HCT116 (cell line): ENCODE measurements at regions of chr2 and their contacts with region 1.

Region 1: DNA sequence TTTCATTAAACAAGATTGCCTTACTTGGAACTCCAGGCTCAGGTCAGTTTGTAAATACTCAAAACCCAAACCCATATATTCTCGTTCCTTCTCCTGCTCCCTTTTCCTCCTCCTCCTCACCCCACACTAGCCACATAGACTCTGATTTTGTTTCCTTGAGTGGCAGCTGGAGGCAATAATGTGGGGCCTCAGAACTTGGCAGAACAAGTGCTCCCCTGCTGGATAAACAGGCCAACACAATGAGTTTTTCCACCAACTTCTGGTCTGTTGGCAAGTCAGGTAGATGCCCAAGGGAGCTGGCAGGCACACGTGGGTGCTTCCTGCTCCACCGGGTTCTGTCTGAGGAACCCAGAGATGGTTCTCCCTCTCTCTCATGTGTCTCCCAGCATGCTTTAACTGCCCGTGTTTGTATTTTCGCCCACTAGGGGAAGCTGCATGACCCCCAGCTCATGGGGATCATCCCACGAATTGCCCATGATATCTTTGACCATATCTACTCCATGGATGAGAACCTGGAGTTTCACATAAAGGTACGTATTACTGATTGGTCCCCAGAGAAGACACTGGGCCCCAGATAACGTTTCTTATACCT is 61.9 kb downstream of the KIF5C start:
- DNase-seq: no peak
- ATAC-seq: peak; percentile 42
- H3K4me3 ChIP-seq: no peak overlapping the region
- H3K27ac ChIP-seq: no peak overlapping the region
- H3K4me1 ChIP-seq: no peaks in the 10 kb centered on the region
- H3K27me3 ChIP-seq: no peaks in the 10 kb centered on the region
- CTCF ChIP-seq: peak in 2 of 3 experiments; percentile 19 to 32; a peak in 3 of 6 replicates
- POLR2A ChIP-seq: no peak
- RAD21 ChIP-seq: peak; percentile 24

Region 2: GRCh38 chr2:148926291-148926961 is 10.5 kb before region 1 on chr2:
- CTCF ChIA-PET with region 1: interaction called, 14 read pairs
- POLR2A ChIA-PET with region 1: interaction called, 3 read pairs
- RAD21 ChIA-PET with region 1: no interaction called
- intact Hi-C with region 1: no loop called
- DNase-seq: peak; percentile 33
- ATAC-seq: peak; percentile 84
- H3K4me3 ChIP-seq: peak overlapping the region; percentile 55 to 62
- H3K27ac ChIP-seq: peak overlapping the region; percentile 58
- H3K4me1 ChIP-seq: peaks cover 7 to 17% of the 10 kb centered on the region in 2 experiments
- H3K27me3 ChIP-seq: no peaks in the 10 kb centered on the region
- CTCF ChIP-seq: peak; percentile 50 to 91 (median 82); a peak in 5 of 6 replicates
- POLR2A ChIP-seq: no peak
- RAD21 ChIP-seq: peak; percentile 61

Region 3: GRCh38 chr2:149145314-149146295 is 208.7 kb after region 1 on chr2:
- CTCF ChIA-PET with region 1: no interaction called
- POLR2A ChIA-PET with region 1: no interaction called
- RAD21 ChIA-PET with region 1: no interaction called
- intact Hi-C with region 1: no loop called
- DNase-seq: no peak
- ATAC-seq: no peak
- H3K4me3 ChIP-seq: no peak overlapping the region
- H3K27ac ChIP-seq: no peak overlapping the region
- H3K4me1 ChIP-seq: no peaks in the 10 kb centered on the region
- H3K27me3 ChIP-seq: no peaks in the 10 kb centered on the region
- CTCF ChIP-seq: no peak
- POLR2A ChIP-seq: no peak
- RAD21 ChIP-seq: no peak